H1 (cell line): ENCODE measurements at regions of chr3 and their contacts with region 1.

Region 1: GRCh38 chr3:146160964-146161662 is at the start of gene PLOD2:
- DNase-seq: peak; percentile 36 to 77
- H3K4me3 ChIP-seq: peak within 1 kb of the TSS; percentile 69 to 89 (median 73)
- H3K27ac ChIP-seq: peak within 1 kb of the TSS; percentile 58; the same call in 1 of the 2 replicates
- H3K4me1 ChIP-seq: peaks cover 0 to 7% (median 3%) of the 10 kb centered on the region in 4 experiments; a peak in 3 of 7 replicates
- H3K27me3 ChIP-seq: peaks cover 0 to 6% (median 1%) of the 10 kb centered on the region in 4 experiments; a peak in 3 of 7 replicates
- CTCF ChIP-seq: no peak
- EP300 ChIP-seq: no peak; a peak in 1 of 3 replicates
- POLR2A ChIP-seq: peak; percentile 46 to 86
- RAD21 ChIP-seq: no peak
- total RNA-seq, gene PLOD2: 25.7 and 28.7 TPM in 2 replicates

Region 2: DNA sequence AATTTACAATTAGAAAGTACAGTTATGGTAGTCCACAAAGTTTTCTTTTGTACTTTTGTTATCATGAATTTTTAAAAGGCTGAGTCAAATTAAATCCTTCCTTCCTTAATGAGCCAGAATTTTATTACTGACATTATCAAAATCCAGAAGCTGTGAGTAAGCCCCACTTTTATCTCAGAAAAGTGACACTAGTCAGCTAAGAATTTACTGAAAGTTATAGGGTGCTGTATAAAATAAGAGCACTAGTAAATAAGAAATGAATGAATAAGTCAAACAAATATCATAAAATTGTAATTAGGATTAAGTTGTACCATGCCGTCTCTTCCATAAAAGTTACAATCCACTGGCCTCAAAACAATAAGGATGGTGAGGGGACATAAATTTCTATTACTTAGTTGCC is 15.5 kb before region 1 on chr3:
- CTCF ChIA-PET with region 1: interaction called, 12 read pairs
- POLR2A ChIA-PET with region 1: interaction called, 3 read pairs
- DNase-seq: no peak
- H3K4me3 ChIP-seq: no peak overlapping the region
- H3K27ac ChIP-seq: no peak overlapping the region
- H3K4me1 ChIP-seq: no peaks in the 10 kb centered on the region; a peak in 1 of 7 replicates
- H3K27me3 ChIP-seq: no peaks in the 10 kb centered on the region
- CTCF ChIP-seq: no peak
- EP300 ChIP-seq: no peak
- POLR2A ChIP-seq: no peak
- RAD21 ChIP-seq: no peak

Region 3: GRCh38 chr3:146177519-146177918 is 16.4 kb after region 1 on chr3:
- CTCF ChIA-PET with region 1: interaction called, 12 read pairs
- POLR2A ChIA-PET with region 1: interaction called, 3 read pairs
- DNase-seq: no peak
- H3K4me3 ChIP-seq: no peak overlapping the region
- H3K27ac ChIP-seq: no peak overlapping the region
- H3K4me1 ChIP-seq: no peaks in the 10 kb centered on the region
- H3K27me3 ChIP-seq: no peaks in the 10 kb centered on the region
- CTCF ChIP-seq: no peak
- EP300 ChIP-seq: no peak
- POLR2A ChIP-seq: no peak
- RAD21 ChIP-seq: no peak